ENCODE measurements at regions of chr7 and their contacts with region 1.

Region 1: DNA sequence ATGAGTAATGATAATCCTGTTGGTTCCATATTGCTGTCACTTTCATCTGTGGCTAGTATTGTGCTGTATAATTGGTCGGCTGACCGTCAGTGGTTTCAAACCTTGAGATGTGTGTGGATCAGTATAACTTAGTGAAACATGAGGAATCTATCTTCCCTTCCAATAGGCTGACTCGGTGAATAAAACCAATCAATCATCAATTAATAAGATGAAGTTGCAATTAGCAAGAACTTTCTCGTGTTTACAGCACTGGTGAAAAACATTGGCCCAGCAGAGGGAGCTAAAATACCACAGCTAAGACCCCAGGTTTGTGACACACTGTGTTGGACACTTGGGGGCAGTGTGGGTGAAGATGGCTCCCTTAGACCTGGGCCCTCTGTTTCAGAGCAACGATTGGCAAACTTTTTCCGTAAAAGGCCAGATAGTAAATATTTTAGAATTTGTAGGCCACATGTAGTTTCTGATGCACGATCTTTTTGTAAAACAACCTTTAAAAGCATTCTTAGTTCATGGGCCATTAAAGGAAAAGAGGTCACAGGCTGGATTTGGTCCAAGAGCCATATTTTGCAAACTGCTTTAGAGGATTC is 47.8 kb downstream of the STRA8 start:
- DNase-seq: peak; percentile 83
- H3K4me3 Mint-ChIP-seq: no peak overlapping the region
- H3K27ac Mint-ChIP-seq: no peak overlapping the region
- H3K4me1 Mint-ChIP-seq: peaks cover 25% of the 10 kb centered on the region
- H3K27me3 Mint-ChIP-seq: peaks cover 17% of the 10 kb centered on the region

Region 2: DNA sequence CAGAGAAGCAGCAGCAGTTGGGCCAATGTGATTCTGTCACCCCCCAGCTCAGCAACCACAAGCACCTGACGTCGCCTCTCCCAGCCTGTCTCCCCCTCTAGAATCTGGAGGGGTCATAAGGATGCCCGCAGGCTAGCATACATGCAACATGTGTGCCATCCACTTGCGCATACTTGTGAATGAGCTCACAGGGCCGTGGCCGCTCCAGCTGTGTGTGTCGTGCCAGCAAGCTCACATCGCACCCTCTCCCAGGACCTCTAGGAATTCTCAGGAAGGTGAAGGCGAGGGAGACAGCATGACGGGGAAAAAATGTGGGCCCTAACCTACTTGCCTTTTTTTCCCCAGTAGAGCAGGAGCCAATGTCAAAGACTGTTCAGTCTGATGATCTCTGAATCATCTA is 32.5 kb after region 1 on chr7:
- CTCF ChIA-PET with region 1: no interaction called
- POLR2A ChIA-PET with region 1: no interaction called
- DNase-seq: no peak
- H3K4me3 Mint-ChIP-seq: no peak overlapping the region
- H3K27ac Mint-ChIP-seq: no peak overlapping the region
- H3K4me1 Mint-ChIP-seq: no peaks in the 10 kb centered on the region
- H3K27me3 Mint-ChIP-seq: no peaks in the 10 kb centered on the region

Region 3: DNA sequence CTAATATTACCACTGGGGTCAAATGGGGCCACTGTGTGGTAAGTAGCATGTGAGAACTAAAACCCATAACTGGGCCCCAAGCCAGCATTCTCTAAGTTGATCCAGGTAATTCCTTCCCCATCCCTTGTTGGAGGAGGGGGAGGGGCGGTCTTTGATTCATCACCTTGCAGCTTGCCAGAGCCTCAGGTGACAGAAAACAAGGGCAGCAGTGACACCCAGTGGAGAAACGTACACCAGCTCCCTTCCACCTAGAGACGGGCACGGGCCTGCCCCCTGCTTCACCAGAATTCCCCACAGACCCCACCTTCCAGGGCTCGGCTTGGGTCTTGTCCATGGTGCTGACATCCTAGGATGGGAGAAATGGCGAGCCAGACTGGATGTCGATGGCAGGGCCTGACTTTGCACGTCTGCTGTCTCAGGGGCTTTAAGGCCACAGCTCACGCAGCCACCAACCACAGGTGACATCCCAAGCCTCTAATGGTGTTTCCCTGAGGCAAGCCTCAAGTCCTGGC is 54.2 kb after region 1 on chr7:
- CTCF ChIA-PET with region 1: interaction called, 38 read pairs
- POLR2A ChIA-PET with region 1: interaction called, 5 read pairs
- DNase-seq: peak; percentile 41
- H3K4me3 Mint-ChIP-seq: no peak overlapping the region
- H3K27ac Mint-ChIP-seq: no peak overlapping the region
- H3K4me1 Mint-ChIP-seq: peaks cover 4% of the 10 kb centered on the region
- H3K27me3 Mint-ChIP-seq: no peaks in the 10 kb centered on the region

Measured in activated CD4-positive, alpha-beta memory T cell treated with anti-CD3 and anti-CD28 coated beads, Interleukin-2, amount 10 ng/mL, durations not matched to agents 7 days and 5 days (primary cell).